Activated naive CD4-positive, alpha-beta T cell treated with anti-CD3 and anti-CD28 coated beads, Interleukin-2, amount 10 ng/mL, durations not matched to agents 7 days and 5 days (primary cell): ENCODE measurements at regions of chr22 and their contacts with region 1.

Region 1: DNA sequence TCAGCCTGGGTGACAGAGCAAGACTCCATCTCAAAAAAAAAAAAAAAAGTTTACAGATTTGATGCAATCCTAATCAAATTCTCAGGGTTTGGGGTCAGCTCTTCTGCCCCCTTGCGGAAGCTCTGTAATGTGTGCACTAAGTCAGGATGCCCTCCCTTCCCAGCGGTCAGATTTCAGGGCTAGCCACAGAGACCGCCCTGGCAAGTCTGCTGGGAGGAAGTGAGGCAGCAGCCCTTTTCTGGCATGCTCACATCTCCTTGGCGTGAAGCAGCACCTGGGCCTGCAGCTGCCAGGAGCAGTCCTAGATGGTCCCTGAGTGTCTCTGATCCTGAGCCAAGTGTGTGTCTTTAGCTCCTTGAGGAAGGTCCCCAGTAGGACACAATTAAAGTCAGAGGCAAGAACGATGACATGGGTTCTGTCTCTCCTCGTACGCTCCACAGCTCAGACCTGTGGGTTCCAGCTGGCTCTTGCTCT is 10.9 kb upstream of the APOBEC3C start:
- DNase-seq: peak; percentile 86
- H3K4me3 Mint-ChIP-seq: no peak overlapping the region
- H3K27ac Mint-ChIP-seq: no peak overlapping the region
- H3K4me1 Mint-ChIP-seq: peaks cover 15% of the 10 kb centered on the region
- H3K27me3 Mint-ChIP-seq: peaks cover 49% of the 10 kb centered on the region

Region 2: DNA sequence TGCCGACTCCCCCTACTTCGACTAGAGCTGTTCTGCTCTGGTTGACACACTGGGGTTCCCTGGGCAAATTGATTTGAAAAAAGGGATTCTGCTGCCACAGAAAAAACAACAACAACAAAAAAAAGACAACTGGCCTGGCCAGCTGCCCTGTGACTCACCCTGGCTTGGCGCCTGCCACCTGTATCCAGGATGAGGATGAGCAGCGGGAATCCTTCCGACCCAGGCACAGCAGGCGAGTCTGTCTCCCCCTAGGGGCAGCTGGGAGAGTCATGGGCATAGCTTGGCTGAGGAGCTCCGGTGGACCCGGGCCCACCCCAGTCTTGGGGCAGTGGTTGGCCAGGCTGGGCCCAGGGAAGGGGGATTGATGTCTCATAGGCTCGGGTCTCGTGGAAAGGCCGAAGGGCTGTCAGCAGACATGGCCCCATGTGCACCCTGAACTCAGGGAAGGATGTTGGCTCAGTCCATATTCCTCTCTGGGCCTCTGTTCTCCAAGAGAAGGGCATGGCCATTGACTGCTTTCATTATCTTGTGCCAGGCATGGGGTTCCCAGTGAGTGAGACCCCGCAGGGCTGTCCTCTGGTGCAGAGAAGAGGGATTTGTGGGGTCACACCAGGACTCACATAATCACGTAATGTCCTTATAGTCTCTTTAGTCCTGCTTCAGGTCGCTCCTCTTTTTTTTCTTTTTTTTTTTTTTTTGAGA is 237.0 kb before region 1 on chr22:
- CTCF ChIA-PET with region 1: interaction called, 13 read pairs
- DNase-seq: peak; percentile 61
- H3K4me3 Mint-ChIP-seq: no peak overlapping the region
- H3K27ac Mint-ChIP-seq: no peak overlapping the region
- H3K4me1 Mint-ChIP-seq: peaks cover 4% of the 10 kb centered on the region
- H3K27me3 Mint-ChIP-seq: peaks cover 24% of the 10 kb centered on the region

Region 3: DNA sequence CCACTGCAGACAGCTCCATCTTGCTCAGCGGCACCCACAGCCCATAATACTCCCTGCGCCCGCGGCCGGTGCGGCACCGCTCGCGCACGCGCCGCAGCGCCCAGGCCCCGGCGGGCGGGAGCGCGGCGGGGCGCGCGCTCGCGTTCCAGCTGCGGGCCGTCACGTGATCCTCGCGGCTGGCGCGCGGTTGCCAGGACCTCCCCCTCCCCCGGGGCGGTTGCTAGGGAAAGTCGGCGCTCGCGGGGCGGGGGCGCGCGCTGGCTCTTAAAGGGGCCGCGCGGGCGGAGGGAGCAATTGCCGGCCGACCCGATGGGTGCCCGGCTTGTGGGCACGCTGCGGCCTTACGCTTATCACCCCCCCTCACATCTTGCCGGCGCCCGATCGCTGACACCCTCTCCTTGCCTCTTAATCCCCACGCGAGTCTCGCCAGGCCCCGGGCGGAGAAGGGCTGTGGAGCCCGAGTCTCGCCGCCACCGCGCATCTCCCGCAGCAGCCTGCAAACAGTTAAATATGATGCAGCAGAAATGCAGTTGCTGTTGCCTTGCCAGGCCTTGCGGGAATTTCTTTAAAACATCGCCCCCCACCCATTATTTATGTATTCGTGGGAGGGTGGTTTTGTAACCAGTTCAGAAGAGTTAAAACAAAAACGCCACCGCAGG is 130.9 kb before region 1 on chr22 and contains the start of gene CBX6:
- CTCF ChIA-PET with region 1: interaction called, 81 read pairs
- DNase-seq: peak; percentile 94
- H3K4me3 Mint-ChIP-seq: peak within 1 kb of the TSS; percentile 93
- H3K27ac Mint-ChIP-seq: peak within 1 kb of the TSS; percentile 88
- H3K4me1 Mint-ChIP-seq: peaks cover 53% of the 10 kb centered on the region
- H3K27me3 Mint-ChIP-seq: peaks cover 34% of the 10 kb centered on the region

Region 4: DNA sequence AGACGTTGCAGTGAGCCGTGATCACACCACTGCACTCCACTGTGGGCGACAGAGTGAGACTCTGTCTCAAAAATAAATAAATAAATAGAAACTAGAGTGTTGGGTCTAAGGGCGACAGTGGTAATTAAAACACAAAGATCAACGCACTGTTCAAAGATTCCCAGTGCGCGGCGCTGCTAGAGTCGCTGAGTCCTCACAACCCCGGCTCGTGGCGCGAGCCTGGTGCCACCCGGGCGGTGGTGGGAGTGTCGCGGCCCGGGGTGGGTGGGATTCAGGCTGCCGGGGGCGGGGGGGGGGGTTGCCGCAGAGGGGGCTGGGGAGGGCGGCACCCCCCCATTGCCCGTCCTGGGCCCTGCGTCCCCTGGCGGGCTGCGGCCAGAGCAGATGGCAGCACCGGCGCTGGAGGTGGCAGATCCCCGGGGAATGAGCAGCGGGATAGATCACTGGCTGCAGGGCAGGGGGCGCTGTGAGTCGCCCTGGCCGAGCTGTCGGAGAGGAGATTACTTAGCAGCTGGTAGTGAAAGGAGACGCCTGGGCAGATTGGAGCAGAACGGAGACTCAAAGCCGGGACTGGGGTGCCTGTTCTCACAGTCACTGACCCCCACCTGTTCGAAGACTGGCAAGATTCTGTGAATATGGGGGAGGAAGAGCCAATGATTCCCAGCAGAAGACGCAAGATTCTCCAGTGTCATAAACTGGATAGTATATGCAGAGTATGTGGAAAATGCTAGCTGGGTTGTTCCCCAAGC is 76.0 kb before region 1 on chr22:
- CTCF ChIA-PET with region 1: interaction called, 11 read pairs
- DNase-seq: peak; percentile 59
- H3K4me3 Mint-ChIP-seq: no peak overlapping the region
- H3K27ac Mint-ChIP-seq: no peak overlapping the region
- H3K4me1 Mint-ChIP-seq: peaks cover 3% of the 10 kb centered on the region
- H3K27me3 Mint-ChIP-seq: peaks cover 58% of the 10 kb centered on the region

Region 5: GRCh38 chr22:38973289-38974169 is 29.7 kb before region 1 on chr22:
- CTCF ChIA-PET with region 1: interaction called, 70 read pairs
- DNase-seq: peak; percentile 73
- H3K4me3 Mint-ChIP-seq: no peak overlapping the region
- H3K27ac Mint-ChIP-seq: no peak overlapping the region
- H3K4me1 Mint-ChIP-seq: peaks cover 5% of the 10 kb centered on the region
- H3K27me3 Mint-ChIP-seq: peaks cover 85% of the 10 kb centered on the region

Region 6: GRCh38 chr22:38981992-38982927 is 20.9 kb before region 1 on chr22 and contains the start of gene APOBEC3B:
- CTCF ChIA-PET with region 1: interaction called, 12 read pairs
- DNase-seq: peak; percentile 84
- H3K4me3 Mint-ChIP-seq: peak within 1 kb of the TSS; percentile 70
- H3K27ac Mint-ChIP-seq: peak within 1 kb of the TSS; percentile 86
- H3K4me1 Mint-ChIP-seq: peaks cover 57% of the 10 kb centered on the region
- H3K27me3 Mint-ChIP-seq: peaks cover 50% of the 10 kb centered on the region

Region 7: DNA sequence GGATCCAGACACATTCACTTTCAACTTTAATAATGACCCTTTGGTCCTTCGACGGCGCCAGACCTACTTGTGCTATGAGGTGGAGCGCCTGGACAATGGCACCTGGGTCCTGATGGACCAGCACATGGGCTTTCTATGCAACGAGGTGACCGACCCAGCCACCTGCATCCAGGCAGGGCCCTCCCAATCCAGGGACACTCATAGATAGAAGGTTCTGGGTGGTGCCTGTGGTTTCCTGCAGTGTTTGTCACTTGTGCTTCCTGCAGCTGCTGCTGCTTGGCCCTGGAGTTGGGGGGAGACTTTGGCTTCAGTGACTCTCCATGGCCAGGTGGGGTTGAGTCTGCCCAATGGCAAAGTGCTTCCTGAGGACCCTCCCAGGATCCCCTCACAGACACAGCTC is 13.7 kb before region 1 on chr22:
- CTCF ChIA-PET with region 1: interaction called, 11 read pairs
- DNase-seq: peak; percentile 68
- H3K4me3 Mint-ChIP-seq: peak overlapping the region; percentile 21
- H3K27ac Mint-ChIP-seq: peak overlapping the region; percentile 91
- H3K4me1 Mint-ChIP-seq: peaks cover 74% of the 10 kb centered on the region
- H3K27me3 Mint-ChIP-seq: peaks cover 29% of the 10 kb centered on the region

Region 8: DNA sequence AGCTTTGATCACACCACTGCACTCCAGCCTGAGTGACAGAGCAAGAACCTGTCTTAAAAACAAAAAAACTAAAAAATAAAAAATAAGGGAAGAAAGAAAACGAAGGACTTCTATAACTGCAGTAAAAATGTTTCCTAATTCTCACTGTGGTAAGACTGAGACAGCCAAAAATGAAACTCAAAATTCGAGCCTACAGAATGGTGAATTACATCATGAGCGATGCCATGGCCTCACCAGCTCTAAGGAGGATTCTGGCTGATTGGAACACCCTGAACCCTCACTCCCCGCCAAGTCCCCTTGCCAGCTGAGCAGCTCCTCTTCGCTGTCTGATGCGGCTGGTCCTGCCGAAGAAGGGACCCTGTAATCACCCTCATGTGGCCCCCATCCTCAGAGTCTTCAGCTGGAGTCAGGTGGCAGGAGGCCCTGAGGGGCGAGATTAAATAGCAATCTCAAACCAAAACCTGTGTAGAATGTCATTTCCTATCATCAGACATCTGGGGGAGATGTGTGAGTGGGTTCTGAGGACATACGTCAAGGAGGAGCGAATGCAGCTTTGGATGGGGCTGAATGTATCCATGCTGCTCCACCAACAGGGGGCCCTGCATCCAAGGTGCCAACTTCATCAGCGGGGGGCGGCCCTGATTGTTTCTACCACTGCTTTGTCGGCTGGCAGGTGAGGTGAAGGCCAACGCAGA is 212.4 kb after region 1 on chr22:
- CTCF ChIA-PET with region 1: no interaction called
- DNase-seq: peak; percentile 42
- H3K4me3 Mint-ChIP-seq: no peak overlapping the region
- H3K27ac Mint-ChIP-seq: no peak overlapping the region
- H3K4me1 Mint-ChIP-seq: no peaks in the 10 kb centered on the region
- H3K27me3 Mint-ChIP-seq: peaks cover 65% of the 10 kb centered on the region